Posterior vena cava (tissue), 2 donors: ENCODE measurements at regions of chr2 and their contacts with region 1.

Region 1: GRCh38 chr2:140814141-140814540 is 1316.7 kb downstream of the LRP1B start:
- DNase-seq: no peak

Region 2: GRCh38 chr2:140797718-140798117 is 16.4 kb before region 1 on chr2:
- intact Hi-C with region 1: no loop called
- DNase-seq: no peak

Region 3: DNA sequence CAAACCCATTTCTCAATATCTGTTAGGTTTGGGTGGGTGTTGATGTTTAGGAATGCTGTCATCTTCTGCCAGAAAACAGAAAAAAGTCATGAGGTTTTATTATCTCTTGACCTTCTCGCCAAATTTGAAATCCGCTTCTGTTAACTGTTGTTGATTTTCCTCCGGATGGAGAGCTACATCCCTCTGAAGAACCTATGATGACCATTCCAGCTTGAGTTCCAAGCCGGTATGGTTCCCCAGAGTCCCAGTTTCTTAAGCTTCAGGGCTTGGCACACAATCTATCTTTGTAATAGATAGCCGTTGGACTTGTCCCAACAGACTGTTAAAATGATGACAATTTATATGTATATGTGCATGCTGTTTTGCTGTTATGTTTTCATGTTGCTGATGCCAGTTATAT is 115.7 kb after region 1 on chr2:
- intact Hi-C with region 1: loop called in 1 of 2 experiments (anchors 5 kb)
- DNase-seq: no peak